ENCODE measurements at regions of chr17 and their contacts with region 1.

Region 1: GRCh38 chr17:4709794-4710692 is at the start of gene ARRB2:
- DNase-seq: peak; percentile 98 to 100 (median 99)
- ATAC-seq: peak; percentile 81
- H3K4me3 ChIP-seq: peak within 1 kb of the TSS; percentile 91 to 95
- H3K4me3 Mint-ChIP-seq: peak within 1 kb of the TSS; percentile 98
- H3K27ac ChIP-seq: peak within 1 kb of the TSS; percentile 80 to 86
- H3K27ac Mint-ChIP-seq: peak within 1 kb of the TSS; percentile 98
- H3K4me1 ChIP-seq: peaks cover 35% of the 10 kb centered on the region
- H3K4me1 Mint-ChIP-seq: peaks cover 45% of the 10 kb centered on the region
- H3K27me3 ChIP-seq: no peaks in the 10 kb centered on the region
- H3K27me3 Mint-ChIP-seq: no peaks in the 10 kb centered on the region
- CTCF ChIP-seq: peak; percentile 74
- total RNA-seq, gene ARRB2: 222 to 226 TPM

Region 2: DNA sequence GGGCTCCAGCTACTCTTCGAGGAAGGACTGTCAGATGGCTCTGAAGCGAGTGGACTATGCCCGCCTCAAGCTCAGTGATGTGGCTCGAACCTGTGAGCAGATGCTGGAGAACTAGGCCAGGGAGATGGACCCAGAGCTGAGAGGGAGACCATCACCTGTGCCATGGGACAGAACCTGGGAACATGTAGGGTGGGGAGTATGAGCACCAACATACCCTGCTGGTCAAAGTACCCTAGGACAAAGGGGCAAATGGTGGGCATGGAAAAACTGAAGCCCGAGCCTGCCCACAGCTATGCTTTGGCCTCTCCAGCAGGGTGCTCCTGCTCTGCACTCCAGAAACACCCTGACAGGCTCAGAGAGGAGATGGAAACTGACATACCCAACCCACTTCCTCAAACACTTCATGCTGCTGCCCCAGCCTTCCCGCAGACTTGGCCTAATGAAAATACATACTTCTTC is 23.1 kb after region 1 on chr17:
- CTCF ChIA-PET with region 1: interaction called, 17 read pairs
- POLR2A ChIA-PET with region 1: interaction called, 14 read pairs
- intact Hi-C with region 1: loop called (anchors 1 kb)
- DNase-seq: peak in 1 of 9 experiments; percentile 45
- ATAC-seq: no peak
- H3K4me3 ChIP-seq: no peak overlapping the region
- H3K4me3 Mint-ChIP-seq: peak overlapping the region; percentile 39
- H3K27ac ChIP-seq: no peak overlapping the region
- H3K27ac Mint-ChIP-seq: no peak overlapping the region
- H3K4me1 ChIP-seq: peaks cover 24% of the 10 kb centered on the region
- H3K4me1 Mint-ChIP-seq: peaks cover 30% of the 10 kb centered on the region
- H3K27me3 ChIP-seq: no peaks in the 10 kb centered on the region
- H3K27me3 Mint-ChIP-seq: no peaks in the 10 kb centered on the region
- CTCF ChIP-seq: no peak

Region 3: GRCh38 chr17:4789901-4790704 is 80.1 kb after region 1 on chr17:
- CTCF ChIA-PET with region 1: interaction called, 45 read pairs
- POLR2A ChIA-PET with region 1: interaction called, 30 read pairs
- intact Hi-C with region 1: loop called (anchors 1 kb)
- DNase-seq: peak; percentile 54 to 94 (median 77)
- ATAC-seq: peak; percentile 77
- H3K4me3 ChIP-seq: peak overlapping the region; percentile 56 to 60
- H3K4me3 Mint-ChIP-seq: peak overlapping the region; percentile 89
- H3K27ac ChIP-seq: peak overlapping the region; percentile 63 to 68
- H3K27ac Mint-ChIP-seq: peak overlapping the region; percentile 96
- H3K4me1 ChIP-seq: peaks cover 29% of the 10 kb centered on the region
- H3K4me1 Mint-ChIP-seq: peaks cover 27% of the 10 kb centered on the region
- H3K27me3 ChIP-seq: peaks cover 15 to 20% of the 10 kb centered on the region in 2 experiments
- H3K27me3 Mint-ChIP-seq: peaks cover 26% of the 10 kb centered on the region
- CTCF ChIP-seq: peak; percentile 80

Region 4: DNA sequence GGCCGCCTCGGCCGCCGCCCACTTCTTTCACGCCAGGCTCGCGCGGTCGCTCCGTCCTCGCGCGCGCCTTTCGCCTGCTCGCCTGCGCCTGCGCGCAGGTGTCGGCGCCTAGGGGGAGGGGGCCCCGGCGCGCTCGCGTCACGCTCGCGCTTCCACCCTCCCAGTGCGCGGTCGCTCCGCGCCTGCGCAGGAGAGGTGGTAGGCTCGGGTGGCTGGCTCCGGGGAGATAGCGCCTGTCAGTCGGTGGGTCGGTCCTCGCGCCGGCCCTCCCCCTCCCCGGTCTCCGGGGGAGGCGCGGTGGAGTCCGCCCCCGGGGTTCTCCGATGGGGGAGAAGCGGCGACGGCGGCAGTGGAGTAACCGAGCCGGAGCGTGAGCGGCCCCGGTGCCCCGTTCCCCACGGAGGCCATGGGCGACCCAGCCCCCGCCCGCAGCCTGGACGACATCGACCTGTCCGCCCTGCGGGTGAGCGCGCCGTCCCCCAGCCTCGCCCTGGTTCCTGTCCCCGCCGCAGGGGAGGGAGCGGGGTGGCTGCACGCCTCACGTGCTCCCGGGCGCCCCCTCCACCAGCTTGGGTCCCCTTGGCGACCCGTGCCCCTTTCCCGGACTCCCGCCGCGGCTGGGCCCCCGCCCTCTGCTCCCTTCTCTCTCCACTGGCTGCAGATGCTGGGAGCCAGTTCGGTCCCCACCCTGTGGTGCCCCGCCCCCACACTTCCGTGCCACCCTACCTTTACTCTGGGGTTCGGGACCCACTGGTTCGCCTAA is 123.3 kb after region 1 on chr17 and contains the start of gene MINK1:
- CTCF ChIA-PET with region 1: interaction called, 3 read pairs
- POLR2A ChIA-PET with region 1: interaction called, 3 read pairs
- intact Hi-C with region 1: loop called (anchors 1 kb)
- DNase-seq: peak; percentile 75 to 98 (median 88)
- ATAC-seq: peak; percentile 93
- H3K4me3 ChIP-seq: peak within 1 kb of the TSS; percentile 75 to 77
- H3K4me3 Mint-ChIP-seq: peak within 1 kb of the TSS; percentile 91
- H3K27ac ChIP-seq: peak within 1 kb of the TSS; percentile 73 to 80
- H3K27ac Mint-ChIP-seq: peak within 1 kb of the TSS; percentile 90
- H3K4me1 ChIP-seq: peaks cover 26% of the 10 kb centered on the region
- H3K4me1 Mint-ChIP-seq: peaks cover 39% of the 10 kb centered on the region
- H3K27me3 ChIP-seq: no peaks in the 10 kb centered on the region
- H3K27me3 Mint-ChIP-seq: peaks cover 6% of the 10 kb centered on the region
- CTCF ChIP-seq: no peak
- total RNA-seq, gene MINK1: 85.9 to 86.0 TPM

Region 5: DNA sequence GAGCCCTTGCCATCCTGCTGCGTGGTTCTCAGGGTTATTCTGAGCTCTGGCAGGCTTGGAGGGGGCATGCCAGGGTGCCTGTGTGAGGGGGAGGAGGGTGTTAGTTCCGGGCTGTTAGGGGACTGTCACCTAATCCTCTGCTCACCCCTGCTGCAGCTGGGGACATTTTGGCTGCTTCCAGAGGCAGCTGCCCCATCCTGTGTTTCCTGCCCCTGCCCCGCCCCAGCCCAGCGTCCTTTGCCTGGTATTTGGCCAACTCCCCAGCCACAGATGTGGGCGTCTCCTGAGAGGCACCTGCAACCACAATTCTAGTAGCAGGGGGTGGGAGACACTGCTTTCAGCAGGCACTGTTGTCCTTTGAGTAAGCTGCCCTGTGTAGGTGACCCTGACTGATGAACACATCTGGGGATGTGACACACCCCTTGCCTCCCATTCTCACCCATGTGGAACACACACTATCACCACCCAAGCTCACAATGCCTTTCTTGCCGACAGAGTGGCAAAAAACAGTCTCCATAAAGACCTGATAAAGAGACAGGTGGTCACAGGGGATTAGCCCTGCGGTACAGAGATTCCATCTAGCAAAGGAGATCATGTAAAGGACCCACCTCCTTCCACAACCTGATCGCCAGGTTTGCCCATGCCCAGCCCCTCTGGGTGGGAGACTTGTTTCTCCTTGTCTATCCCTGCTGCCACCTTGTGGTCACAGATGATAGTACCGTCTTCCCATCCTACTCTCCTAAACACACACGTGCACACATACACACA is 193.2 kb after region 1 on chr17 and contains the start of gene CHRNE:
- CTCF ChIA-PET with region 1: interaction called, 6 read pairs
- POLR2A ChIA-PET with region 1: interaction called, 8 read pairs
- intact Hi-C with region 1: loop called (anchors 1 kb)
- DNase-seq: peak; percentile 52 to 92 (median 79)
- ATAC-seq: peak; percentile 25
- H3K4me3 ChIP-seq: peak within 1 kb of the TSS; percentile 14 to 27
- H3K4me3 Mint-ChIP-seq: peak within 1 kb of the TSS; percentile 48
- H3K27ac ChIP-seq: peak within 1 kb of the TSS in 1 of 2 experiments; percentile 50
- H3K27ac Mint-ChIP-seq: peak within 1 kb of the TSS; percentile 76
- H3K4me1 ChIP-seq: peaks cover 51% of the 10 kb centered on the region
- H3K4me1 Mint-ChIP-seq: peaks cover 38% of the 10 kb centered on the region
- H3K27me3 ChIP-seq: no peaks in the 10 kb centered on the region
- H3K27me3 Mint-ChIP-seq: no peaks in the 10 kb centered on the region
- CTCF ChIP-seq: peak; percentile 94
- total RNA-seq, gene CHRNE: 5.5 to 6.1 TPM

Region 6: GRCh38 chr17:4966844-4967538 is 256.9 kb after region 1 on chr17:
- CTCF ChIA-PET with region 1: interaction called, 3 read pairs
- POLR2A ChIA-PET with region 1: interaction called, 7 read pairs
- intact Hi-C with region 1: loop called in 1 of 2 experiments (anchors 1 kb)
- DNase-seq: peak; percentile 87 to 99 (median 94)
- ATAC-seq: peak; percentile 79
- H3K4me3 ChIP-seq: peak overlapping the region; percentile 90
- H3K4me3 Mint-ChIP-seq: no peak overlapping the region
- H3K27ac ChIP-seq: peak overlapping the region; percentile 64 to 90
- H3K27ac Mint-ChIP-seq: peak overlapping the region; percentile 53
- H3K4me1 ChIP-seq: peaks cover 22% of the 10 kb centered on the region
- H3K4me1 Mint-ChIP-seq: peaks cover 19% of the 10 kb centered on the region
- H3K27me3 ChIP-seq: no peaks in the 10 kb centered on the region
- H3K27me3 Mint-ChIP-seq: no peaks in the 10 kb centered on the region
- CTCF ChIP-seq: no peak

Region 7: GRCh38 chr17:5111402-5112204 is 401.6 kb after region 1 on chr17 and contains the start of gene ZNF232:
- CTCF ChIA-PET with region 1: no interaction called
- POLR2A ChIA-PET with region 1: no interaction called
- intact Hi-C with region 1: loop called in 1 of 2 experiments (anchors 1 kb)
- DNase-seq: peak; percentile 72 to 94 (median 88)
- ATAC-seq: peak; percentile 89
- H3K4me3 ChIP-seq: peak within 1 kb of the TSS; percentile 90 to 97
- H3K4me3 Mint-ChIP-seq: peak within 1 kb of the TSS; percentile 91
- H3K27ac ChIP-seq: peak within 1 kb of the TSS; percentile 60 to 77
- H3K27ac Mint-ChIP-seq: peak within 1 kb of the TSS; percentile 79
- H3K4me1 ChIP-seq: peaks cover 11% of the 10 kb centered on the region
- H3K4me1 Mint-ChIP-seq: peaks cover 30% of the 10 kb centered on the region
- H3K27me3 ChIP-seq: peaks cover 0 to 14% of the 10 kb centered on the region in 2 experiments
- H3K27me3 Mint-ChIP-seq: peaks cover 15% of the 10 kb centered on the region
- CTCF ChIP-seq: no peak
- total RNA-seq, gene ZNF232: 5.7 to 6.1 TPM

Measured in CD8-positive, alpha-beta T cell (primary cell).